Body of pancreas (tissue), 4 donors: ENCODE measurements at regions of chr9 and their contacts with region 1.

Region 1: GRCh38 chr9:21102305-21102704 is 24.6 kb upstream of the IFNB1 start:
- DNase-seq: no peak
- ATAC-seq: no peak
- H3K4me3 ChIP-seq: no peak overlapping the region
- H3K27ac ChIP-seq: no peak overlapping the region
- H3K4me1 ChIP-seq: no peaks in the 10 kb centered on the region
- H3K27me3 ChIP-seq: no peaks in the 10 kb centered on the region
- CTCF ChIP-seq: no peak
- POLR2A ChIP-seq: no peak

Region 2: DNA sequence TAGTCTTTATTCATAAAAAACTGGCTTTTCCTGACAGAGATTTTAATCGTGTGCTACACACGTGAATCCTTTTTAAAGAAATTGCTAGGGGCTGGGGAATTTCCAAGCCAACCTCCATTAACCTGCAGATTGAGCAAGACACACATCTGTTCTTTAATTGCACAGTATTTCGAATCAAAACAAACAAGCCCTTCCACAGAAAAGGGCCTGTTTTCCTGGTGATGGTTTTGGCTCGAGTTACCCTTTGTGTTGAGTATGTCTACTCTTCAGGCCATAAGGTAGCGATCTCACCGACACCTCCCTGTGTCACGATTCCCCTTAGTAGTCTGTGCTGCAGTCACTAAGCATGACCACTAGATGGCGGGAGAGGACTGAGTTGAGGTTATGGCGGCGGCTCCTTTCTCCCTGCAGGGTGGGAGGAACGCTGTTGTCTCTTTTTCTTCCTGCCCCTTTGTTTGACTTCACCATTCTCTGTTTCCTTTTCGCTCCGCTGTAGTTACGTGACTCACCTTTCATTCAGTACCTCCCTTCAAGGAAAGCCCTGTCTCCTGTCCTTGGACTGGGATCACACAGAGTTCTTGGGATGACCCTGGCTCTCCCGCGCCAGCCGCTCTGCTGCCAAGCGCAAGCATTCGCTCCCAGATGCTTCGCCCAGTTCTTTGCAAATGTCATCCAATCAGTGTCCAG is 1176.3 kb before region 1 on chr9:
- intact Hi-C with region 1: loop called (anchors 10 kb)
- DNase-seq: peak; percentile 70 to 80 (median 76)
- ATAC-seq: peak; percentile 97
- H3K4me3 ChIP-seq: no peak overlapping the region
- H3K27ac ChIP-seq: no peak overlapping the region
- H3K4me1 ChIP-seq: peaks cover 4% of the 10 kb centered on the region
- H3K27me3 ChIP-seq: no peaks in the 10 kb centered on the region
- CTCF ChIP-seq: peak; percentile 91 to 98 (median 94)
- POLR2A ChIP-seq: no peak

Region 3: GRCh38 chr9:21056931-21057330 is 45.4 kb before region 1 on chr9:
- intact Hi-C with region 1: no loop called
- DNase-seq: no peak
- ATAC-seq: no peak
- H3K4me3 ChIP-seq: no peak overlapping the region
- H3K27ac ChIP-seq: no peak overlapping the region
- H3K4me1 ChIP-seq: no peaks in the 10 kb centered on the region
- H3K27me3 ChIP-seq: no peaks in the 10 kb centered on the region
- CTCF ChIP-seq: no peak
- POLR2A ChIP-seq: no peak

Region 4: GRCh38 chr9:21160178-21160577 is 57.9 kb after region 1 on chr9:
- intact Hi-C with region 1: loop called (anchors 10 kb)
- DNase-seq: peak in 1 of 4 donors; percentile 7
- ATAC-seq: no peak
- H3K4me3 ChIP-seq: no peak overlapping the region
- H3K27ac ChIP-seq: no peak overlapping the region
- H3K4me1 ChIP-seq: no peaks in the 10 kb centered on the region
- H3K27me3 ChIP-seq: no peaks in the 10 kb centered on the region
- CTCF ChIP-seq: no peak
- POLR2A ChIP-seq: no peak

Region 5: DNA sequence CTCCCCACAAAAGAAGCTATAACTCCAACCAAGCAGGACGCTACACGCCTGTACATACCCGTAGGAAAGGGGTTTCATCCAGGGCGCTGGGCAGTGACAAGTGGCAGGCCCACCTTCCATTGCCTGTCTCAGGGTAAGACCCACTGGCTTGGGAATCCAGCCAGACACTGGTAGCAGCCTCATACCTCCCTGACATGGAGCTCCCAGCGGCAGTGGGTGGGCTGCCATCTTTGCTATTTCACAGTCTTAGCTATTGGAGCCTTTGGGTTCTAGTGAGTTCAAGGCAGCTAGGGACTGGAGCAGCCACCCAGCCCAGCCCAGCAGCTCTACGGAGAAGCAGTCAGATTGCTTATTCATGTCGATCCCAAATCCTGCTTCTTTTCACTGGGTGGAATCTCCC is 108.0 kb after region 1 on chr9:
- intact Hi-C with region 1: no loop called
- DNase-seq: no peak
- ATAC-seq: no peak
- H3K4me3 ChIP-seq: no peak overlapping the region
- H3K27ac ChIP-seq: no peak overlapping the region
- H3K4me1 ChIP-seq: no peaks in the 10 kb centered on the region
- H3K27me3 ChIP-seq: no peaks in the 10 kb centered on the region
- CTCF ChIP-seq: no peak
- POLR2A ChIP-seq: no peak